Activated CD4-positive, alpha-beta T cell treated with anti-CD3 and anti-CD28 coated beads for 36 hours (primary cell): ENCODE measurements at regions of chr4 and their contacts with region 1.

Region 1: DNA sequence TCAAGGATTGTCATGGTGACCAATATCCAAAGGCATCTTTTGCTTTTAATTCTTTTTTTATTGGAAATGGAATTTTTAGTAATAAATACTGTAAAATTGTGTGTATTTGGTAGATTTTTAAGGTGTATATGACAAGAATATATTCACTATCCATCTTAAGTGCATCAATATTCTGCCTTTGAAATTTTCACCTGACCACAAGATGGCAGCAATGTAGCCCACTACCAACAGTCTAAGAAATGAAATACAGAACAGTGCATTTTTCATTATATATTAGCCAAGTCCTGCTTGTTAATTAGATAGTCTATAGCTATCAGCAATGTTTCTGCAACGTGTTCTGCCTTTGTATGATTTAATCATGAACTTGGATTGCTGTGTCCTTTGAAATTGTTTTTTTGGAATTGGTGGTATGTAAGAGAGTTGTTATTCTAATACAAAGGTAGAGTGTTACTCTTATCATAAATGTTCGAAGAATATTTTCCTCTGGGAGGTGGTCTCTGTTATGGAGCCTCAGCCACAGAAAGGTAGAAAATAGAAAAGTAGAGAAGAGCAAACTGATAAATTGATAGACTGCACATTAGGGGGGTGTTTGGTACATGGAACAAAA is 38.2 kb downstream of the HPGDS start:
- DNase-seq: peak; percentile 29
- ATAC-seq: no peak
- H3K4me3 Mint-ChIP-seq: no peak overlapping the region
- H3K27ac Mint-ChIP-seq: no peak overlapping the region
- H3K4me1 Mint-ChIP-seq: no peaks in the 10 kb centered on the region
- H3K27me3 Mint-ChIP-seq: no peaks in the 10 kb centered on the region

Region 2: DNA sequence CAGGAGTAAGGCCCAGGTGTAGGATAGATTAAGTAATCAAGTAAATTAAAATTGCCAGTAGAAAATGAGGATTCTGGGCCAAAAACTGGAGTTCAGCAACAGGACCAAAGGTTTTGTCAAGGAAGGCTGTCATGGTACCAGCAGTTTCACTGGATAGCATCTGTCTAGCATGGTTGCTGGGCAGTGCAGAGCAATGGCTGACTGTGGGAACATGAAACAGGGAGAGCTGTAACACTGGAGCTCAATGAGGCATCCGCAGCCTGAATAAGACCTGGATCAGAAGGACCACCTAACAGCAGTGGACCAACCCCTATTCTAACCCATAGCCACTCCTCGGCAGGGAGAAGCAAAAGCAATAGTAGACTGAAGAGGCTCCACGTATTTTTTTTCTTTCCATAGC is 343.6 kb before region 1 on chr4:
- CTCF ChIA-PET with region 1: no interaction called
- POLR2A ChIA-PET with region 1: no interaction called
- intact Hi-C with region 1: no loop called
- DNase-seq: no peak
- ATAC-seq: no peak
- H3K4me3 Mint-ChIP-seq: no peak overlapping the region
- H3K27ac Mint-ChIP-seq: no peak overlapping the region
- H3K4me1 Mint-ChIP-seq: no peaks in the 10 kb centered on the region
- H3K27me3 Mint-ChIP-seq: no peaks in the 10 kb centered on the region

Region 3: GRCh38 chr4:94390804-94391410 is 86.4 kb after region 1 on chr4:
- CTCF ChIA-PET with region 1: interaction called, 7 read pairs
- POLR2A ChIA-PET with region 1: no interaction called
- intact Hi-C with region 1: loop called (anchors 1 kb)
- DNase-seq: peak; percentile 43
- ATAC-seq: no peak
- H3K4me3 Mint-ChIP-seq: no peak overlapping the region
- H3K27ac Mint-ChIP-seq: no peak overlapping the region
- H3K4me1 Mint-ChIP-seq: no peaks in the 10 kb centered on the region
- H3K27me3 Mint-ChIP-seq: peaks cover 7% of the 10 kb centered on the region

Region 4: GRCh38 chr4:94419956-94420355 is 115.5 kb after region 1 on chr4:
- CTCF ChIA-PET with region 1: no interaction called
- POLR2A ChIA-PET with region 1: no interaction called
- intact Hi-C with region 1: no loop called
- DNase-seq: no peak
- ATAC-seq: no peak
- H3K4me3 Mint-ChIP-seq: no peak overlapping the region
- H3K27ac Mint-ChIP-seq: no peak overlapping the region
- H3K4me1 Mint-ChIP-seq: no peaks in the 10 kb centered on the region
- H3K27me3 Mint-ChIP-seq: peaks cover 19% of the 10 kb centered on the region

Region 5: DNA sequence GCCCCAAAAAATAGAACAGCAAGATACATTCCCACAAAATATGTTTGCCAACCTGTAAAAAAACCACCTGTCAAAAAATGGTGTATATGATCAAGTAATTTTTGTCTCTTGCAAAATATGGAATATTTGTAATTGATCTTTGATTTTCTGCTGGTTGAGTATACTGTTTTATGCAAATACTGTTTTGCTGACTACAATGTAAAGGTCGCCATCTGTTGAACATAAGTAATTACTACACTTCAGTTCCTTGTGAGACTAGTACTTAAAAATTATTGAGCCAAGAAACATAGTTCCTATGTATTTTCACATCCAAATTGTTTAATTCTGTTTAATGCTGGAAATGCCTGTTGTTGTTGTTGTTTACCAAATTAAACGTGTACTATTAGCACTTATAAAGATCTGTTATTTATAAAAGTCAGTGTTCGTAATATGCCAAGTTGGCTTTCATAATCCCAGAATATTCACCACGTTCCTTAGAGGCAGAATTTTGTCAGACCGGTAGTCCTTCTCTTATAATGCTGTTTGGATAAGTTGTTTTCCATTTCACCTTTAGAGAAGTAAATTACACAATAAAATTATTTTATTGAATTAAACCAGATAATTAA is 291.5 kb after region 1 on chr4:
- CTCF ChIA-PET with region 1: no interaction called
- POLR2A ChIA-PET with region 1: no interaction called
- intact Hi-C with region 1: loop called (anchors 2 kb)
- DNase-seq: no peak
- ATAC-seq: peak; percentile 53
- H3K4me3 Mint-ChIP-seq: no peak overlapping the region
- H3K27ac Mint-ChIP-seq: no peak overlapping the region
- H3K4me1 Mint-ChIP-seq: no peaks in the 10 kb centered on the region
- H3K27me3 Mint-ChIP-seq: no peaks in the 10 kb centered on the region